Spleen (tissue), 13 donors: ENCODE measurements at regions of chr10 and their contacts with region 1.

Region 1: GRCh38 chr10:14536241-14537213 is 205.8 kb upstream of the FRMD4A start:
- DNase-seq: peak; percentile 86
- H3K4me3 ChIP-seq: no peak overlapping the region
- H3K27ac ChIP-seq: peak overlapping the region in 3 of 8 donors; percentile 42 to 57 (median 46)
- H3K4me1 ChIP-seq: peaks cover 0 to 98% (median 26%) of the 10 kb centered on the region in 6 donors
- H3K27me3 ChIP-seq: no peaks in the 10 kb centered on the region
- CTCF ChIP-seq: peak in 9 of 11 experiments; percentile 54 to 79 (median 69)
- POLR2A ChIP-seq: no peak

Region 2: GRCh38 chr10:14837757-14838581 is 301.4 kb after region 1 on chr10 and contains the starts of genes CDNF, HSPA14 and MSANTD7:
- intact Hi-C with region 1: loop called (anchors 5 kb)
- DNase-seq: peak; percentile 100
- H3K4me3 ChIP-seq: peak within 1 kb of the TSS; percentile 75 to 98 (median 92)
- H3K27ac ChIP-seq: peak within 1 kb of the TSS; percentile 80 to 96 (median 91)
- H3K4me1 ChIP-seq: peaks cover 10 to 39% (median 27%) of the 10 kb centered on the region in 6 donors
- H3K27me3 ChIP-seq: no peaks in the 10 kb centered on the region
- CTCF ChIP-seq: peak in 6 of 11 experiments; percentile 13 to 48 (median 41)
- POLR2A ChIP-seq: peak in 2 of 3 donors; percentile 74 to 84
- total RNA-seq, gene CDNF: 0.91 to 2.5 (median 1.6) TPM in 6 of 7 donors, not detected in the other
- total RNA-seq, gene HSPA14: 11.6 to 24.1 (median 13.4) TPM
- total RNA-seq, gene MSANTD7: 10.0 to 18.4 (median 12.8) TPM

Region 3: GRCh38 chr10:14975670-14976273 is 439.2 kb after region 1 on chr10:
- intact Hi-C with region 1: no loop called
- DNase-seq: no peak
- H3K4me3 ChIP-seq: no peak overlapping the region
- H3K27ac ChIP-seq: no peak overlapping the region
- H3K4me1 ChIP-seq: no peaks in the 10 kb centered on the region
- H3K27me3 ChIP-seq: peaks cover 0 to 10% (median 0%) of the 10 kb centered on the region in 7 donors
- CTCF ChIP-seq: peak in 3 of 11 experiments; percentile 20 to 32 (median 24)
- POLR2A ChIP-seq: no peak